ENCODE measurements at regions of chr10 and their contacts with region 1.

Region 1: GRCh38 chr10:124539935-124540641 is 78.5 kb downstream of the LHPP start:
- DNase-seq: peak in 1 of 2 donors; percentile 38
- H3K4me3 ChIP-seq: no peak overlapping the region
- H3K27ac ChIP-seq: no peak overlapping the region
- H3K4me1 ChIP-seq: peaks cover 0 to 4% (median 1%) of the 10 kb centered on the region in 4 donors
- H3K27me3 ChIP-seq: no peaks in the 10 kb centered on the region
- CTCF ChIP-seq: peak; percentile 78 to 81

Region 2: DNA sequence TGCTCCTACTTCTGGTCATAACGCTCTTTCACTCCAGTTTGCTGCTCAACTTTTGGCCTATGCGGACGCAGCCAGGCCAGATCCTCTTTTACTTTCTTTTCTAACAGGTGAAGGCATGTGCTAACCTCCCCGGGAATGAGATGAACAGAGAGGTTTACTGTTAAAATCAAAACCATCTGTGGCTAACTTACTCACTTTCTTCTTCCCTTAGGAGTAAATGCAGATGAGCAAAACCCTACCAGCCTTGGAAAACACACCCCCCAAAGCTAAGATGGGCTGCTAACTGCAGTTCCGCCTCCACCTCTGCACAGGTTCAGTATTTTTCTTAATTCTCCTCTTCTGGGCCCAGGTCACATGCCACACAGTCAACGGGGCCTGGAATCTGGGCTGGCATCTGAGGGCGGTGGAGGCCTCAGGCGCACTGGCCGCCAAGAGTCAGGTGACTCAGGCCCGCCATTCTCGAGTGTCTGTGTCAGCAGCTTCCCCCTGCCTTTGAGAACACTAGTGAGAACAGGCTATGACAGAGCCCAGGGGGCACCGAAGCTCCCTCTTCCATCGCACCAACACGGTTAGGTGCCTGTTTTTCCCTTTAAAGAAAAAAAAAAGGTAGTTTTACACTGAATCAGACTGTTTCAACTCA is 193.0 kb after region 1 on chr10:
- intact Hi-C with region 1: loop called (anchors 2 kb)
- DNase-seq: peak; percentile 68 to 89
- H3K4me3 ChIP-seq: no peak overlapping the region
- H3K27ac ChIP-seq: peak overlapping the region; percentile 83 to 85
- H3K4me1 ChIP-seq: peaks cover 0 to 65% (median 45%) of the 10 kb centered on the region in 4 donors
- H3K27me3 ChIP-seq: no peaks in the 10 kb centered on the region
- CTCF ChIP-seq: no peak